Endothelial cell of umbilical vein (primary cell): ENCODE measurements at regions of chr15 and their contacts with region 1.

Region 1: DNA sequence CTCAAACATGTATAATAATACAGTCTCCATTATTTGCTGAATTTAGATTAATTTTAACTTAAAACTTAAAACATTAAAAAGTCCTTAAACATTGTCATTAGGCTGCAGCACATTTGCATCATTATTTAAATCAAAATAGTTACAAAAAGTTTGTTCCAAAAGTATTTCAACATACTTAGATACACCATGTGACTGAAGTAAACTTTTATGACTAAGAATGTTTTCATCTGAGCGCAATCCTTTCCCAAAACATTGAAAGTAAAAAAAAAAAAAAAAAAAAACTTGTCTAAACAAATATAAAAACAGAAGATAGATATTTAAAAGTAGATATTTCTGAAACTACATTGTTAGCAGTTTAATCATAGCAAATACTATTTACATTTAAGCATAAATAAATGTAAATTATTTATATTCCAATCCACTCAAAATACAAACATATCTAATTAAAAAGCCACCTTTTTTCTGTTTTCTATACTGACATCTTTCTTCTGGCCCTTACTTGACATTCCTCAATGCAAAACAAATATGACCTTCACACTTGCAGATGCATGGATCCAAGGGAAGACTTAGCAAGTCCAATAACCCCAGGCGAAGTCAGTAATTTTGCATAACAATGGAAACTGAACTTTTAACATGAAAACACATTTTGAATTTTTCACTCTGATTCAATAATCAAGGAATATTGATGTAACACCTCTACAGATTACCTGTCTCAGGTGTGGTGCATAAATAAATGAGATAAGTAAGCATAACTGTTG is 10.3 kb downstream of the FAM227B start:
- DNase-seq: no peak
- H3K4me3 ChIP-seq: no peak overlapping the region
- H3K27ac ChIP-seq: no peak overlapping the region
- H3K4me1 ChIP-seq: no peaks in the 10 kb centered on the region
- H3K27me3 ChIP-seq: no peaks in the 10 kb centered on the region
- CTCF ChIP-seq: no peak
- POLR2A ChIP-seq: no peak

Region 2: DNA sequence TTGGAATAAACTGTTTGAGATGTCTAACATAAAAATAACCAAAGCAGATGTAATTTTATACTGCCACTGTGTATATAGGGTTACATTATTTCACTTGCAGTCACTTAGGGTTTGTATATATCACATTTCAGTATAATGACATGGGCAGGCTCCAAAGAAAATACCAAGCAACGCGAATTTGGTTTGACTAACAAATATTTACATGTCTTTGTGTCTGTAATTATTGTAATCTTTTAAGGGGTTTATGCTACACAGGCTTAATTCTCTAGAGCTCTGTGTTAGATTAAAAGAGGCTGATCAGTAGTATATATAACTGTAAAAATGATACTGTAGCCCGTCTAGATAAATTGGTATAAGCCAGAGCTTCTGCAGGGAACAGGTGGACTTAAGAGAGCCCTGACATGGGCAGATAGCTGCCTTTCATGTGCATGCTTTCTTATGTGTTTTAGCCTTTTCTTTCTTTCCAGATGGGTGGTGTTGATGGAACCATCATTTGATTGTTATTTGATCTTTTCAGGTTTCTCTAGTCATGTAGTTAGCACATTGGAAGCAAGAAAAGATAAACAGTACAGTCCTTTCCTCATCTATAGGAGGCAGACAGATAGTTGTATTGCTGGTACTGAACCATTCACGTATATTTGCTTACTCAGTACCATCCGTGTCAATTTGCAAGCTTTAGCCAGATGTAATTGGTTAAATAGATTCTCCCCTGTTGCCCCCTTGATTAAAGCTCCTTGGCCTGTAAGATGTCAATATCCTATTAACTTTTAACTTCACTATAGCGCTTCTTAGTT is 354.2 kb before region 1 on chr15:
- CTCF ChIA-PET with region 1: no interaction called
- POLR2A ChIA-PET with region 1: no interaction called
- dilution Hi-C with region 1: no loop called
- intact Hi-C with region 1: loop called (anchors 5 kb)
- DNase-seq: no peak
- H3K4me3 ChIP-seq: no peak overlapping the region
- H3K27ac ChIP-seq: no peak overlapping the region
- H3K4me1 ChIP-seq: no peaks in the 10 kb centered on the region
- H3K27me3 ChIP-seq: no peaks in the 10 kb centered on the region
- CTCF ChIP-seq: no peak
- POLR2A ChIP-seq: no peak

Region 3: DNA sequence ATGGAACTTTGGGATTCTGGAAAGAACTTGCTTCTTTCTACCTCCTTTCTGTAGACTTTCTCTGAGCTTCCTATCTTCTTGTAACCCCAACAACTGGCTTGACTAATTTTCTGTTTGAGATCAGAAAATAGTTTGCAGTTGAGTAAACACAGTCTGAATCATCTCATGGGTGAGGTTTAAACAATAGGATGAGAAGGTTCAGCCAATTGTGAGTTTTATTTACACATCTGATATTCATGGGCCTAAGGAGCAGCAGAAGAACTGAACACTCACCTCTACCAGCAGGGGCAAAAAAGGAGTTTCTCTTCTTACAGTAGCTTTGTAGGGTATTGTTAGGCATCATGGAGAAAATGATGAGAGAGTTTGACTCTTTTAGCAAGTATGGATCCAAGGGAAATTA is 64.7 kb after region 1 on chr15:
- CTCF ChIA-PET with region 1: no interaction called
- POLR2A ChIA-PET with region 1: no interaction called
- dilution Hi-C with region 1: no loop called
- intact Hi-C with region 1: no loop called
- DNase-seq: peak; percentile 5
- H3K4me3 ChIP-seq: no peak overlapping the region
- H3K27ac ChIP-seq: no peak overlapping the region
- H3K4me1 ChIP-seq: no peaks in the 10 kb centered on the region
- H3K27me3 ChIP-seq: peaks cover under 1 to 4% of the 10 kb centered on the region in 2 experiments
- CTCF ChIP-seq: no peak
- POLR2A ChIP-seq: no peak